ENCODE measurements at regions of chr2 and their contacts with region 1.

Region 1: GRCh38 chr2:72770879-72771461 is 54.9 kb downstream of the EXOC6B start:
- DNase-seq: no peak
- ATAC-seq: peak; percentile 61 to 68
- H3K4me3 ChIP-seq: no peak overlapping the region
- H3K27ac ChIP-seq: no peak overlapping the region
- H3K4me1 ChIP-seq: peaks cover 2% of the 10 kb centered on the region
- H3K27me3 ChIP-seq: no peaks in the 10 kb centered on the region

Region 2: DNA sequence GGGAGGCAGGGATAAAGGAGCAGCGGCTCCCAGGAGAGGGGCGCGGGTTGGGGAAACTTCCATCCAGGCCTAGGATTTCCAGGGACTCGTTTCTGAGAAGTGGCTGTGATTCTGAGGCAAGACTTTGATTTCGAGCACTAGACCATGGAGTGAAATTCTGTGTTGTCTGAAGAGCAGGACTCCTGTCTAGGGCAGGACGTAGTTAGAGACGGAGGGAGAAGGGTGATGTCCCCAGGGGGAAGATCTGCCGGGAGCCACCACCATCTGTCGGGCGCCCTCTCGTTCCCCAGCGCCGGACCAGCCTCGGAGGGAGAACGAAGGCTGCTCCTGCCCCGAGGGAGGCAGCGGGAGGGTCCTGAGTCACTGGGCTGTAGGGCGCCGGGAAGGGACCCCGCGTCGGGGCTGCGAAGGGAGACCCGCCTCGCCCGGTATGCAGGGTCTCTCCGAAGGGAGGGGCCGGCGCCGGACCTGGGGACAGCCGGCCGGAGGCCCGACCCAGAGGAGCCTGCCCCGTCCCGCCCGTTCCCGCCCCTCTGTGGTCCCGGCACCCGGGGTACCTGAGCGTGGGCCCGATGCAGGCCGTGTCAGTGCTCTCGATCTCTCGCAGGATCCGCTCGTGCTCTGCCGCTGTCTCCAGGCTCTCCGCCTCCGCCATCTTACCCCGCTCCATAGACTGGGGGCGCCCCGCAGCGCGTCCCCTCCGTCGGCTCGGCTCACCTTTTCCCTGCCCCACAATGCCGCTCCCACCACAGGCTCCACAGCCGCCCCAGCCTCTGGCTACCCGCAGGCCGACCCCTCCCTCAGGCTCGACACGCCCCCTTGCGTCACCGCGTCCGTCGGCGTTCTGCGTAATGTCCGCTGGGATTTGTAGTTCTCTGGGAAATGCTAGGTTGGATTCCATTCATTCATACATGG is 54.5 kb after region 1 on chr2 and contains the start of gene EXOC6B:
- intact Hi-C with region 1: loop called in 2 of 4 experiments (anchors 5 to 10 kb)
- DNase-seq: peak; percentile 94 to 98 (median 97)
- ATAC-seq: peak; percentile 98
- H3K4me3 ChIP-seq: peak within 1 kb of the TSS; percentile 68
- H3K27ac ChIP-seq: peak within 1 kb of the TSS; percentile 10
- H3K4me1 ChIP-seq: peaks cover 2% of the 10 kb centered on the region
- H3K27me3 ChIP-seq: no peaks in the 10 kb centered on the region
- total RNA-seq, gene EXOC6B: 93.6 to 127 (median 121) TPM

Region 3: DNA sequence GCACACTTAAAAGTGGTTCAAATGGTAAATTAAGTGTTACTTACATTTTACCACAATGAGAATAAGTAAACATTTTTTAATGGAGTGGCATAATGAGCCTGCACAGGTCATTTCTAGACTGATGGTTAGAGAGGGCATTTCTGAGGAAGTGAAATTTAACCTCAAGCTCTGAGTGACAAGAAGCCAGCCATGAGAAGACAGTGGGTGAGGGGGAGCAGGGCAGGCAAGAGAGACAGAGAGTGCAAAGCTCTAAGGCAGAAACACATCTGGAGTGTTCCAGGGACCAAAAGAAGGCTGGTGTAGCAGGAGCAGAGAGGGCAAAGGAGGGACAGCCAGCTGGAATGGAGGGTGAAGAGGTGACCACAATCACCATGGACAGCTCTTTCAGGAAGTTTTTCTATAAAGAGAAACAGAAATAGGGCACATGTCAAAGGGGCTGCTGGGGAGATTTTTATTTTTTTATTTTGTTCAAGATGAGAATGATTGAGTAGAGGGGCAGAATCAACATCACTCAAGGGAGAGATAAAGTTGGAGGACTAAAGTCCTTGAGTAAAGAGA is 75.6 kb after region 1 on chr2:
- intact Hi-C with region 1: no loop called
- DNase-seq: no peak
- ATAC-seq: no peak
- H3K4me3 ChIP-seq: no peak overlapping the region
- H3K27ac ChIP-seq: no peak overlapping the region
- H3K4me1 ChIP-seq: no peaks in the 10 kb centered on the region
- H3K27me3 ChIP-seq: no peaks in the 10 kb centered on the region

Region 4: DNA sequence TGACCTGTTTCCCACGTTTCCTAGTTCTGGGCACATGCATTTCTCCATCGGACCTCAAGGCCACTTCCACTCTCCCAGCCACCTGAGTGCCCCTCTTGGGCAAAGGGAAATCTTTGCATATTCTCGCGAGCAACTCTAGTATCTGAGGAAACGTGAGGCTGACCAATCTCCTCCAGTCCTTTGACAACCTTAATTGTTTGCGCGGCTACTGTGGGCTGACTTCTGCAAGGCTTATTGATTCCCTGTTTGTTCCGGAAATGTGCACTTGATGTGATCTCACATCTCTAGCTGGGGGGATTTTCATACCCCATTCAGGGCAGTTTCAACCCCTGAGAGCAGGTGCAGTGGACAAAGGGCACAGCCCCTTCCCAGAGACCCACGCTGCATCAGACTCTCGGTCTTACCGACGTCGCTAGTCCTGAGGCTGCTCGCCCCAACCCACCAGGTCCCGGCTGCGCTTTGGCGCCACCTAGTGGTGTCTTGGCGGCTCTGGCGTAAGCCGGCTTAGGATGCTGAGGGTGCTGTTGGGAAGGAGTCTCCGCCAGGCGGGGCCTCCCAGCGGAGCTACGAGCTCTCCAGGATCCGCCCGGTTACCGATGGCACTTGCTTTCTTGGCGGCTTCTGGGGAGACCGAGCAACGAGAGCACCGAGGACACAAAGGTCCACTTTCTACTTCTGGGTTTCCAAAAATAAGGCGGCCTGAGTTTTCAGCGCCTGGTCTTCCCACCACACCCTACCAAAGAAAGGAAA is 91.4 kb after region 1 on chr2:
- intact Hi-C with region 1: loop called (anchors 2 to 5 kb)
- DNase-seq: peak; percentile 88 to 96 (median 95)
- ATAC-seq: peak; percentile 98 to 99
- H3K4me3 ChIP-seq: no peak overlapping the region
- H3K27ac ChIP-seq: no peak overlapping the region
- H3K4me1 ChIP-seq: no peaks in the 10 kb centered on the region
- H3K27me3 ChIP-seq: no peaks in the 10 kb centered on the region